ENCODE measurements at regions of chr11 and their contacts with region 1.

Region 1: GRCh38 chr11:66579017-66579606 is 10.7 kb upstream of the CTSF start:
- DNase-seq: peak; percentile 74 to 92 (median 82)
- H3K4me3 ChIP-seq: no peak overlapping the region
- H3K27ac ChIP-seq: no peak overlapping the region
- H3K4me1 ChIP-seq: peaks cover 0 to 6% of the 10 kb centered on the region in 2 donors
- H3K27me3 ChIP-seq: no peaks in the 10 kb centered on the region
- CTCF ChIP-seq: peak; percentile 73 to 93 (median 82)
- POLR2A ChIP-seq: no peak

Region 2: DNA sequence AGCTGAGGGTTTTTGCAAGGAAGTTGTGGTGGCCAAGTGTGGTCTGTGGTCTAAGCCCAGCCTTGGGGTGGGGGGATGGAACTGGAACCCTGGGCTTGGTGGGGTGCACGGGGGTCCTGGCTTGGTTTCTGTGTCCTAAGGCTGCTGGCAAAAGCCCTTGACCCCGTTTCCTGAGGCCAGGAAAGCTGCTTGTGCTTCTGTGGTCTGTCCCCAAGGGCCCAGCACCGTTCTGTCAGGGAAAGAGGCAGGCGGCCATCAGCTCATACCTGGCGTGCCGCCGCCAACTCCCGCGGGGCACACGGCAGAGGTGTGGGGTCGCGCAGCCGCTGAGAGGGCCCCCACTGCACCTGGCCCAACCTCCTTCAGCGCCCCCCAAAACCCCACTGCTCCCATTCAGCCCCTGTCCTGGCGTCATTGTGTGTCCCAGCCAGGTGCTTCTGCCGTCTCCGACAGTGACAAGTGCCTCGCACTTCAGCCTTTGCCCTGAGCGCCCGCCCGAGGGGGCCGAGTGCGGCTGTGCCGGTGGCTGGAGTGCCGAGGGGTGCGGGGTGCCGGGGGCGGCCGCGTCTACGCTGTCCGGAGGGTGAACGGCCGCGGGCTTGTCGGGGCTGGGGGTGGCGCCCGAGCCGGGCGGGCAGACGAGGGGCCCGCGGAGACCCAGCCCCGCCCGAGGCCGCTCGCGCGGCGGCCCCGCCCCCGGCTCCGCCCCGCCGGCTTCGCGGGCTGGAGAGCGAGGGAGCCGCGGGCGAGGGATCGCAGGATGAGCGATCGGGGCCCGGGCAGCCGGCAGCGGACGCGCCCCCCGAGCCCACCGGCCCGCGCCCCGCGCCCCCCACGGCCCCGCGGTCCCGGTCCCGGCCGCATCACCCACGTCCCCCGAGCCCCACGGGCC is 301.4 kb before region 1 on chr11 and contains the start of gene CNIH2:
- intact Hi-C with region 1: no loop called
- DNase-seq: peak in 1 of 7 donors; percentile 31
- H3K4me3 ChIP-seq: peak within 1 kb of the TSS in 1 of 4 donors; percentile 55
- H3K27ac ChIP-seq: peak within 1 kb of the TSS in 2 of 5 donors; percentile 30 to 74
- H3K4me1 ChIP-seq: peaks cover 6% of the 10 kb centered on the region in 2 donors
- H3K27me3 ChIP-seq: no peaks in the 10 kb centered on the region
- CTCF ChIP-seq: no peak
- POLR2A ChIP-seq: no peak
- total RNA-seq, gene CNIH2: 0.55 to 10.9 (median 1.2) TPM in 7 of 9 donors, not detected in the others

Region 3: DNA sequence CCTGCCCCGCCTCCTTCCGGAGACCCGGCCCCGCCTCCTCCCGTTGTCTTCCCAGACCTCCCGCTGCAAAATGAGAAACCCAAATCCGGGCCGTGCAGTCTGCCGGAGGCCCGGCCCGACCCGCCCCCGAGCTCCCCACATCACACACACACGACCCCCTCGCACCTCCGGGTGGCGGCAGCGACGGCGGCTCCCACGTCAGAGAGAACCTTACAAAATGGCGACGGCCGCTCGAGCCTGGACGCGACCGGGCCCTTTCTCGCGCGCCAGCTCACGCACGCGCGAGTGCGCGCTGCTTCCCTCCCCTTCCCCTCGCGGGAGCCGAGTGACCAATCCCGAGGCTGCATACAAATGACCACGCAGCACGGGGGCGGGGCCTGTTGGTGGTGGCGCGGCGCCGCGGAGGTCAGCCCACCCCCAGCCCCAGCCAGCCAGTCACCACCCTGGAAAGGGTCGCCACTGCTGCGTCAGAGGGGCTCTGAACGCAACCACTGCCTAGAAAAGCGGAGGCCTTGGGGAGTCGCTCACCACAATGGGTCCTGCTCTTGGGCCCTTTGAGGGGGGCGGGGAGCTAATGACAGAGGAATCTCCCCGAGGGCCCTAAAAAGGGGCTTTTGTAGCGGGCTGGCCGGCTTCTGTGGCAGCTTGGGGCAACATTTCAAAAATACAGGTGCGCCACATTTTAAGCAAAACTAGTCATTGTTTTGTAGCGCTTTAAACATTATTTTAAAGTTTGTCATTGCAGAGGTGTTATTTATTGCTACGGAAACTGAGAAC is 98.7 kb after region 1 on chr11 and contains the start of gene RBM4B:
- intact Hi-C with region 1: loop called (anchors 2 to 5 kb)
- DNase-seq: peak; percentile 96 to 99 (median 98)
- H3K4me3 ChIP-seq: peak within 1 kb of the TSS in 3 of 4 donors; percentile 72 to 97 (median 91)
- H3K27ac ChIP-seq: peak within 1 kb of the TSS; percentile 86 to 97 (median 89)
- H3K4me1 ChIP-seq: peaks cover 9 to 33% of the 10 kb centered on the region in 2 donors
- H3K27me3 ChIP-seq: no peaks in the 10 kb centered on the region
- CTCF ChIP-seq: no peak
- POLR2A ChIP-seq: peak; percentile 90 to 91
- total RNA-seq, gene RBM4B: 9.9 to 40.3 (median 18.9) TPM

Region 4: GRCh38 chr11:67356864-67357561 is 777.9 kb after region 1 on chr11:
- intact Hi-C with region 1: no loop called
- DNase-seq: peak; percentile 65 to 79 (median 71)
- H3K4me3 ChIP-seq: no peak overlapping the region
- H3K27ac ChIP-seq: peak overlapping the region in 3 of 5 donors; percentile 23 to 99 (median 98)
- H3K4me1 ChIP-seq: peaks cover 30 to 50% of the 10 kb centered on the region in 2 donors
- H3K27me3 ChIP-seq: no peaks in the 10 kb centered on the region
- CTCF ChIP-seq: peak; percentile 86 to 97 (median 92)
- POLR2A ChIP-seq: no peak

Measured in adrenal gland (tissue), 19 donors.